HEK293T (cell line): ENCODE measurements at regions of chr13 and their contacts with region 1.

Region 1: DNA sequence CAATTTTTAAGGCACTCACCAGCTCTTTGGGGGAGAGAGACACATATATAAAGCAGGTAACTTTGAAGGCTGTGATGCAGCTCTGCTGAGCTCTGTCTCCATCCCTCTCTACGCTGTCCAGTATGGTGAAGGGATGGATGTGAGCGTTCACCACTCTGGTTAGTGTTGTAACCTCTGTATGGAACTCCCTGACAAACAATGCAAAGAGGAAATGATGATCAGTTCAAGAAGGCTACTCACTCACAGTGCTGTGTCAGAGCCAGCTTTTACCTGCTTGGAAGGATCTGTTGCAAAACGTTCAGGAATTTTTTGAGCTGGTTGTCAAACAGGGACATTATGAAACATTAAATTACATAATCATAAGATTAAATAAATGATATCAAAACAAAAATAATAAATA is 90.8 kb upstream of the SLC10A2 start:
- DNase-seq: no peak

Region 2: GRCh38 chr13:103276775-103277498 is 119.9 kb after region 1 on chr13:
- CTCF ChIA-PET with region 1: interaction called, 10 read pairs
- POLR2A ChIA-PET with region 1: no interaction called
- DNase-seq: no peak